Sciatic nerve (tissue), 2 donors: ENCODE measurements at regions of chr9 and their contacts with region 1.

Region 1: DNA sequence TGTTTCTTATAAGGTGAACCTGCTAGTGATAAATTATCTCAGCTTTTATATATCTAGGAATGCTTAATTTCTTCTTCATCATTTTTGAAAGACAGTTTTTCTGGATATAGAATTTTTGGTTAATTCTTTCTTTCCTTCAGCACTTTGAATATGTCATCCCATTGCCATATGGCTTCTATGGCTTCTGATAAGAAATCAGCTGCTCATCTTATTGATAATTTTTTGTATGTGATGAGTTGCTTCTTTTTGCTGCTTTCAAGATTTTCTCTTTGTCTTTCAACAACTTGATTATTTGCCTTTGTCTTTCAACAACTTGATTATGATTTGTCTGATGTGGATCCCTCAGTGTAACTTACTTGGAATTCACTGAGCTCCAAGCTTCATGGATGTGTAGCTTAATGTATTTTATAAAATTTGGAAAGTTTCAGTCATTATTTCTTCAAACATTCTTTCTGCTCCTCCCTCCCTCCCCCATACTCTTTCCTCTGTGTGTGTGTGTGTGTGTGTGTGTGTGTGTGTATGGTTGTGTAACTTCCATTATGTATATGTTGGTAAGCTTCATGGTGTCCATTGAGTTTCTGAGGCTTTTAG is 243.9 kb downstream of the TLE1 start:
- DNase-seq: no peak
- ATAC-seq: no peak

Region 2: GRCh38 chr9:81999806-82000205 is 554.4 kb after region 1 on chr9:
- intact Hi-C with region 1: loop called (anchors 5 kb)
- DNase-seq: no peak
- ATAC-seq: no peak